ENCODE measurements at regions of chr20 and their contacts with region 1.

Region 1: GRCh38 chr20:561437-562231 is 18.0 kb upstream of the CSNK2A1 start:
- DNase-seq: peak; percentile 83
- H3K4me3 ChIP-seq: no peak overlapping the region; a peak in 1 of 4 replicates
- H3K27ac ChIP-seq: no peak overlapping the region
- H3K4me1 ChIP-seq: no peaks in the 10 kb centered on the region
- H3K27me3 ChIP-seq: peaks cover 13% of the 10 kb centered on the region
- CTCF ChIP-seq: peak; percentile 94
- EP300 ChIP-seq: no peak
- RAD21 ChIP-seq: peak; percentile 95

Region 2: DNA sequence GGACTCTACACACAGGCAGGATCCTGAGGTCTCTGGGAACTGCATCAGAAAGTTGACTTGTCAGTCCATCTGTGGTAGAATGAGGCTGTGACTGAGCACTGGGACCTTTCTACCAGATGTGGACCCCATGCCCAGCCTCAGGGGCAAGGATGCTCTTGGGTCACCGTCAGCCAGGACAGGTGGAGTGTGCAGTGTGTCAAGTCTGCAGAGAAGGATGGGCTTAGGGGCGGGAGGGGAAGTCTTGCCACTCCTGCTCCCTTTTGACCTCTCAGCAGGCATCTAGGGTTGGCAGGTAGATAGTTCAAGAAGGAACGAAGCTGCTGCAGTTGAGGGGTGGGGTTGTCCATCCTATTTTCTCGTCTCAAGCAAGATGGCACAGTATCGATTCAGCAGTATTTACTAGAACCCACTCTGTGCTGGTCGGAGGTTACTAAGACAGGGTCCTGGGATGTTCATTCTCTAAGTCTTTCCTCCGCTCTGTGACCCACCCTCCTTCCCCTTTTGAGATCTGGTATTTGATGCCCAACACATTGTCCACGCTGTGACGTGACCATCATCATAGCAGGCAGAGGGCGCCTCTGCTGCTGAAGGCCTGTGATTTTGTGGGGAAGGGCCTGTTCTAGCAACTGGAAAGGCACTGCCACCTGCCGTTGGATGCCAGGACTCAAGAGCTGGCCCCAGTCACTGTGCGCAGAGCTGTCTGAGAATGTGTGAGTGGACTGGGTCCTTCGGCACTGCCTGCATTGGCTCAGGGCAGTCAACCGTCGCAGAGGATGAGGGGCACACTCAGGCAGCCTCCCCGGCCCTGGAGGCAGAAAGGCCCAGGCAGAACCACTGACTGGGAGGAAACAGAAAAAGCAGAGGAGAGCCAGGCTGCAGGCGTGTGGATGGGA is 130.4 kb before region 1 on chr20:
- CTCF ChIA-PET with region 1: no interaction called
- POLR2A ChIA-PET with region 1: no interaction called
- DNase-seq: peak; percentile 91
- H3K4me3 ChIP-seq: no peak overlapping the region
- H3K27ac ChIP-seq: peak overlapping the region; percentile 22 to 51; a peak in 2 of 4 replicates
- H3K4me1 ChIP-seq: peaks cover 0 to 5% of the 10 kb centered on the region in 2 experiments; a peak in 1 of 4 replicates
- H3K27me3 ChIP-seq: no peaks in the 10 kb centered on the region
- CTCF ChIP-seq: peak; percentile 74
- EP300 ChIP-seq: no peak
- RAD21 ChIP-seq: peak; percentile 83

Region 3: DNA sequence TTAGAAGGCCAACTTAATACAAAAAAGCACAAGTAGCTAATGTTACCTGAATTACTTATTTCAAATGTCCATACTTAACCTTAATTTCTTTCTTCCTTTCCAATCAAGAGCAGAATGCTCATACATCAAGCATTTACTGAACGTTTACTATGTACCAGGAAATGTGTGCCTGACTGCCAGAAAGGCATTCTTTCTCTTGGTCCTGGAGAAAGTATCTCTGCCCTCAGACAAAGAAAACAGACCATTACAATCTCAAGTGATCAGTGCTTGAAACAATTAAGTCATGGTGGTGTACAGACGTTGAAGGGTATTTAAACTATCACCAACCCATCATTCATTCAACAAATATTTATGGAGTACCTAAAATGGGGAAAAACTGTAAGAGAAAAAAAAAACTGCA is 44.4 kb before region 1 on chr20:
- CTCF ChIA-PET with region 1: no interaction called
- POLR2A ChIA-PET with region 1: no interaction called
- DNase-seq: no peak
- H3K4me3 ChIP-seq: no peak overlapping the region
- H3K27ac ChIP-seq: 0 out of 4 replicates have a peak overlapping the region, but pooled peaks of 1 of the 2 experiments have one; percentile 2
- H3K4me1 ChIP-seq: peaks cover 0 to 6% of the 10 kb centered on the region in 2 experiments; a peak in 2 of 4 replicates
- H3K27me3 ChIP-seq: no peaks in the 10 kb centered on the region
- CTCF ChIP-seq: no peak
- EP300 ChIP-seq: no peak
- RAD21 ChIP-seq: no peak

Region 4: DNA sequence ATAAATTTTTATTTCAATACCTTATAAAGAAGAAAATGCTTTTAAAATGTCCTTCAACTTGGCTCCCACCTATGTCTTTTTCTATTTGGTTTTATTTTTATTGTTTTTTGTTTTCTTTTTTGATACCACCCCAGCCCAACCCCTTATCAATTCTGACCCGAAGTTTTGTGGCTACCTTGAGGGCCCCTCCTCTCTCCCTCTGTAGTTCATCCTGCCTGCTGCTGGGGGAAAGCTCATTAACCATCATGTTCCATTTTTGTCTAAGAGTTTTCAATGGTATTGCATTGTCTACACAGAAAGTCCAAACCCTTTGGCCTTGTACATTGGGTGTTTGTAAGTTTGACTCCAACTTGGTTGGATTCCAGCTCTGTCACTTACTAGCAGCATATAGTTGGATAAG is 12.7 kb before region 1 on chr20:
- CTCF ChIA-PET with region 1: interaction called, 10 read pairs
- POLR2A ChIA-PET with region 1: interaction called, 3 read pairs
- DNase-seq: no peak
- H3K4me3 ChIP-seq: no peak overlapping the region
- H3K27ac ChIP-seq: no peak overlapping the region
- H3K4me1 ChIP-seq: peaks cover 0 to 3% of the 10 kb centered on the region in 2 experiments; a peak in 1 of 4 replicates
- H3K27me3 ChIP-seq: peaks cover 10% of the 10 kb centered on the region; the same call in 1 of the 2 replicates
- CTCF ChIP-seq: no peak
- EP300 ChIP-seq: no peak
- RAD21 ChIP-seq: no peak

Region 5: DNA sequence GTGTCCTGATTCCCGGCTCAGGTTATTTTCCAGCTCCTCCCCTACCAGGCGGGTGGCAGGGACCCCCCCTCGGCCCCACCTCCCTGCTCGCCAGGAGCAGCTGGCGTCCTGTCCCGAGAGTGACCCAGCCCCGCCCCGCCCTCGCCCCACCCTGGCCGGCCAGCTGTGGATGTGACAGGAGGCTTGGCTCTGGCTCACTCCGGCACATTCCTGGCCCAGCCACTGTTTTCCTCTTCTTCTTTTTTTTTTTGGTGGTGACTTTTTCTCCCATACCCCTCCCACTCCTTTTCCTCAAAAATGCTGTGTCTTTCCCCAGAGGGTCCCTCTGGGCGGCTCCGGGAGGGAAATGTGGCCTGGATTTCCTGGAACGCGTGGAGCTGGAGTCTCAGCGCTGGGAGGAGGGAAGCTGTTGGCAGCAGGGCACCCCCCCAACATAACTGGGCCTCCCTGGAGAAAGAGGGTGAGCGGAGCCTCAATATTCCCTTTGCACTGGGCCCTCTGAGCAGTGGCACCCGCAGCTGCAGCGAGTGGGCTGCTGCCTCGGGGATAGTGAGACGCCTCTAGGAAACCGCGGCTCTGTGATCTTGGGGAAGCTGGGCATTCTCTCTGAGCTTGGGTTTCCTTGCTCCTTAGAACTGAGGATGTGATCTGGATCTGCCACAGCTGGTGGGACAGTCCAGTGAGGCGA is 10.3 kb after region 1 on chr20:
- CTCF ChIA-PET with region 1: interaction called, 14 read pairs
- POLR2A ChIA-PET with region 1: no interaction called
- DNase-seq: peak; percentile 53
- H3K4me3 ChIP-seq: no peak overlapping the region
- H3K27ac ChIP-seq: no peak overlapping the region
- H3K4me1 ChIP-seq: peaks cover 0 to 3% of the 10 kb centered on the region in 2 experiments; a peak in 1 of 4 replicates
- H3K27me3 ChIP-seq: peaks cover 26% of the 10 kb centered on the region; the same call in 1 of the 2 replicates
- CTCF ChIP-seq: no peak
- EP300 ChIP-seq: no peak
- RAD21 ChIP-seq: no peak

Region 6: GRCh38 chr20:577167-577791 is 15.6 kb after region 1 on chr20:
- CTCF ChIA-PET with region 1: interaction called, 14 read pairs
- POLR2A ChIA-PET with region 1: no interaction called
- DNase-seq: no peak
- H3K4me3 ChIP-seq: no peak overlapping the region
- H3K27ac ChIP-seq: no peak overlapping the region
- H3K4me1 ChIP-seq: no peaks in the 10 kb centered on the region; a peak in 1 of 4 replicates
- H3K27me3 ChIP-seq: peaks cover 17% of the 10 kb centered on the region; the same call in 1 of the 2 replicates
- CTCF ChIP-seq: peak; percentile 27; the same call in 1 of the 2 replicates
- EP300 ChIP-seq: no peak
- RAD21 ChIP-seq: no peak

Region 7: GRCh38 chr20:733861-734260 is 172.2 kb after region 1 on chr20:
- CTCF ChIA-PET with region 1: interaction called, 83 read pairs
- POLR2A ChIA-PET with region 1: no interaction called
- DNase-seq: peak; percentile 41
- H3K4me3 ChIP-seq: no peak overlapping the region
- H3K27ac ChIP-seq: no peak overlapping the region
- H3K4me1 ChIP-seq: no peaks in the 10 kb centered on the region; a peak in 1 of 4 replicates
- H3K27me3 ChIP-seq: peaks cover 5% of the 10 kb centered on the region; the same call in 1 of the 2 replicates
- CTCF ChIP-seq: no peak
- EP300 ChIP-seq: no peak
- RAD21 ChIP-seq: no peak